IMR-90 (cell line): ENCODE measurements at regions of chr6 and their contacts with region 1.

Region 1: GRCh38 chr6:126033696-126034095 is 47.4 kb downstream of the TRMT11 start:
- DNase-seq: peak; percentile 91
- ATAC-seq: peak; percentile 96
- H3K4me3 ChIP-seq: no peak overlapping the region
- H3K27ac ChIP-seq: no peak overlapping the region
- H3K4me1 ChIP-seq: no peaks in the 10 kb centered on the region; the same call in 1 of the 2 replicates
- H3K27me3 ChIP-seq: no peaks in the 10 kb centered on the region
- CTCF ChIP-seq: peak; percentile 81
- POLR2A ChIP-seq: no peak
- RAD21 ChIP-seq: peak; percentile 80

Region 2: GRCh38 chr6:126170978-126171382 is 137.3 kb after region 1 on chr6:
- CTCF ChIA-PET with region 1: interaction called, 6 read pairs
- POLR2A ChIA-PET with region 1: no interaction called
- dilution Hi-C with region 1: no loop called
- in situ Hi-C with region 1: loop called (anchors 10 kb)
- intact Hi-C with region 1: loop called (anchors 2 kb)
- DNase-seq: peak; percentile 26
- ATAC-seq: 0 out of 2 replicates have a peak, but pooled peaks have one; percentile 35
- H3K4me3 ChIP-seq: no peak overlapping the region
- H3K27ac ChIP-seq: no peak overlapping the region
- H3K4me1 ChIP-seq: no peaks in the 10 kb centered on the region
- H3K27me3 ChIP-seq: peaks cover 12% of the 10 kb centered on the region
- CTCF ChIP-seq: peak; percentile 49
- POLR2A ChIP-seq: no peak
- RAD21 ChIP-seq: peak; percentile 38

Region 3: DNA sequence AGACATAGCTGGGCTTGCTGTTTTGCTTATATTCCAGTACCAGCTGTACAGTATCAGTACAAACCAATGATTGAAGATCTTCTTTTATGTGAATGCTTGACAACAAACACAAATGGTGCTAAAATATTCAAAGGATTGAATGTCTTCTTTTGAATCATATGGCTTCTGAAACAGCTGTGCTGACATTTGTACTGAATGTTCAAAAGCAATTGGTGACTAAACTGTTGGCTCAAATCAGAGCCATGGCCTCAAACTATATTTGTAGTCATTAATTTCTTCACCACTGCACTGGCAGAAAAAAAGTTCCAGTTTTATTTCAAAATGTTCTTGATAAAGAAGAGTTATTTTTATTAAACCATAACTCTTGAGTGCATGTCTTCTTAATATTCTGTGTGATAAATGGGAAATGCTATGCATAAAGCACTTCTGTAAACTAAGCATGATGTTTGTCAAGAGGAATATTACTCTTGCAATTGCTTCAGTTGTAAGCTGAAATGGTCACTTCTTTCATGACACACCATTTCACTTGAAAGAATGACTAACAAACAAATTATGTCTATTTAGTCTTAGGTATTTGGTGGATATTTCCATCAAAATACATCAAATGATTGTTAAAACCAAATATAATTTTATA is 260.3 kb after region 1 on chr6:
- CTCF ChIA-PET with region 1: no interaction called
- POLR2A ChIA-PET with region 1: no interaction called
- dilution Hi-C with region 1: no loop called
- in situ Hi-C with region 1: no loop called
- intact Hi-C with region 1: loop called (anchors 1 kb)
- DNase-seq: no peak
- ATAC-seq: no peak
- H3K4me3 ChIP-seq: no peak overlapping the region
- H3K27ac ChIP-seq: no peak overlapping the region
- H3K4me1 ChIP-seq: no peaks in the 10 kb centered on the region
- H3K27me3 ChIP-seq: no peaks in the 10 kb centered on the region; the same call in 1 of the 2 replicates
- CTCF ChIP-seq: no peak
- POLR2A ChIP-seq: no peak
- RAD21 ChIP-seq: no peak

Region 4: GRCh38 chr6:126339796-126340609 is 306.3 kb after region 1 on chr6 and contains the start of gene CENPW:
- CTCF ChIA-PET with region 1: no interaction called
- POLR2A ChIA-PET with region 1: no interaction called
- dilution Hi-C with region 1: no loop called
- in situ Hi-C with region 1: loop called (anchors 25 kb)
- intact Hi-C with region 1: loop called (anchors 5 kb)
- DNase-seq: peak; percentile 86
- ATAC-seq: peak; percentile 96
- H3K4me3 ChIP-seq: peak within 1 kb of the TSS; percentile 83
- H3K27ac ChIP-seq: no peak within 1 kb of the TSS; the same call in 1 of the 2 replicates
- H3K4me1 ChIP-seq: no peaks in the 10 kb centered on the region
- H3K27me3 ChIP-seq: no peaks in the 10 kb centered on the region
- CTCF ChIP-seq: no peak
- POLR2A ChIP-seq: peak; percentile 57; the same call in 1 of the 2 replicates
- RAD21 ChIP-seq: no peak
- total RNA-seq, gene CENPW: 8.2 and 15.0 TPM in 2 replicates

Region 5: DNA sequence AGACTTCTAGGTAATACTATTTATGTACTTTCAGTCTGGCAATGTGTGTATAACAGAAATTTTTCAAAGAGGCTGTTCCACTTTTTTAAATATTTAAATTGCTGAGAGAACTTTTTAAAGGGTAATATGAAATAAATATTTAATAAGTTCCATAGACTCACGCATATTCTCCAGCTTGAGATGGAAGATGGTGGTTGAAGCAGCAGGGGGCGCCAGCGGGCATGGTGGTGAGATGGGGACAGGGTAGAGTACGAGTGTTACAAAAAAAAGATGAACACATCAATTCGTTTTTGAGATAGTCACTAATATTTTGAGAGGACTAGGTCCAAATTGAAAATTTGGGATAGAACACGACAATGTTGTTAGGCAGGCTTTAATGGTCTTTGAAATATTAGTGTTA is 1153.2 kb after region 1 on chr6:
- CTCF ChIA-PET with region 1: interaction called, 4 read pairs
- POLR2A ChIA-PET with region 1: no interaction called
- dilution Hi-C with region 1: no loop called
- in situ Hi-C with region 1: no loop called
- intact Hi-C with region 1: loop called (anchors 5 kb)
- DNase-seq: no peak
- ATAC-seq: no peak
- H3K4me3 ChIP-seq: no peak overlapping the region
- H3K27ac ChIP-seq: no peak overlapping the region
- H3K4me1 ChIP-seq: no peaks in the 10 kb centered on the region
- H3K27me3 ChIP-seq: no peaks in the 10 kb centered on the region; the same call in 1 of the 2 replicates
- CTCF ChIP-seq: peak; percentile 37; the same call in 1 of the 2 replicates
- POLR2A ChIP-seq: no peak
- RAD21 ChIP-seq: 0 out of 2 replicates have a peak, but pooled peaks have one; percentile 25